Panc1 (cell line): ENCODE measurements at regions of chr14 and their contacts with region 1.

Region 1: DNA sequence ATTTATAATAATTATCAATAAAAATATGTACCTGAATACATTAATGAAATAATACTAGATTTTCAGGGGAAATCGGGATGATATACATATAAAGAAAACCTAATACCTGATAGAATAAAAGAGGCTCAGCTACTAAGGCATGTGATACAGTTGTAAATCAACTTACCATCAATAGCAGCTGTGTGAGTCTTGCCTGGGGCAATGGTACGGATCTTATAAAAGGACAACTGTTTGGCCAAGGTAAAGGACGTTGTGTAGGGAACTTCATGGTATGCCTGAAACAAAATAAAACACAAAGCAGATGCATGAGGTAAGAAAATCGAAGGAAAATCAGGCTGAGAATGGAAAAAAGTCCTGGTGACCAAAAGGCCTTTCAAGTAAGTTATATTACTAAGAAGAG is 25.4 kb downstream of the NEK9 start:
- DNase-seq: no peak
- ATAC-seq: no peak
- H3K4me3 ChIP-seq: no peak overlapping the region
- H3K27ac ChIP-seq: no peak overlapping the region
- H3K4me1 ChIP-seq: no peaks in the 10 kb centered on the region
- H3K27me3 ChIP-seq: no peaks in the 10 kb centered on the region
- CTCF ChIP-seq: no peak

Region 2: GRCh38 chr14:74913986-74914573 is 187.4 kb before region 1 on chr14:
- CTCF ChIA-PET with region 1: no interaction called
- POLR2A ChIA-PET with region 1: no interaction called
- in situ Hi-C with region 1: no loop called
- intact Hi-C with region 1: no loop called
- DNase-seq: peak; percentile 35
- ATAC-seq: peak; percentile 81
- H3K4me3 ChIP-seq: no peak overlapping the region
- H3K27ac ChIP-seq: no peak overlapping the region
- H3K4me1 ChIP-seq: no peaks in the 10 kb centered on the region
- H3K27me3 ChIP-seq: no peaks in the 10 kb centered on the region
- CTCF ChIP-seq: peak; percentile 82

Region 3: GRCh38 chr14:74955229-74956026 is 146.1 kb before region 1 on chr14 and contains the start of gene PGF:
- CTCF ChIA-PET with region 1: interaction called, 10 read pairs
- POLR2A ChIA-PET with region 1: no interaction called
- in situ Hi-C with region 1: no loop called
- intact Hi-C with region 1: no loop called
- DNase-seq: no peak
- ATAC-seq: peak; percentile 88
- H3K4me3 ChIP-seq: peak within 1 kb of the TSS; percentile 47 to 53
- H3K27ac ChIP-seq: no peak within 1 kb of the TSS; the same call in 1 of the 2 replicates
- H3K4me1 ChIP-seq: peaks cover 8% of the 10 kb centered on the region; the same call in 1 of the 2 replicates
- H3K27me3 ChIP-seq: no peaks in the 10 kb centered on the region
- CTCF ChIP-seq: no peak
- total RNA-seq, gene PGF: 7.3 TPM

Region 4: DNA sequence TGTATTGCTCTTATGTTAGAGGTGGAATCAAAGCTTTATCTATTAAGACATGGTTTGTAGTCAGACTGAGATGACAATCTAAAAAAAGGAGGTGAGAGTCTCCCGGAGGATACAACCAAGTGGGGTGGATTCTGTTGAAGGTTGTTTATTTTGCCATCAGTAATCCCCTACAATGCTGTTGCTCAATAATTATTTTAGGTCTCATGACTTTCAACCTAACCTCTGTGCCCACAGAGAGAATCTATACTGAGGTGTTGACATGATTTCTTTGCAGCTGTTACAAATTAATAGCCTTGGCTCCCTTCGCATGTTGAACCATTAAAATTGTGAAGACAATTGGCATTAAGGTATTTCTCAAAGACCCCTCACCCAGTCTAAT is 148.5 kb after region 1 on chr14:
- CTCF ChIA-PET with region 1: no interaction called
- POLR2A ChIA-PET with region 1: interaction called, 19 read pairs
- in situ Hi-C with region 1: no loop called
- intact Hi-C with region 1: no loop called
- DNase-seq: no peak
- ATAC-seq: no peak
- H3K4me3 ChIP-seq: no peak overlapping the region
- H3K27ac ChIP-seq: no peak overlapping the region
- H3K4me1 ChIP-seq: no peaks in the 10 kb centered on the region
- H3K27me3 ChIP-seq: no peaks in the 10 kb centered on the region
- CTCF ChIP-seq: no peak

Region 5: GRCh38 chr14:75260040-75260763 is 158.7 kb after region 1 on chr14:
- CTCF ChIA-PET with region 1: no interaction called
- POLR2A ChIA-PET with region 1: no interaction called
- in situ Hi-C with region 1: no loop called
- intact Hi-C with region 1: no loop called
- DNase-seq: no peak
- ATAC-seq: no peak
- H3K4me3 ChIP-seq: no peak overlapping the region; a peak in 1 of 4 replicates
- H3K27ac ChIP-seq: no peak overlapping the region
- H3K4me1 ChIP-seq: peaks cover 14% of the 10 kb centered on the region
- H3K27me3 ChIP-seq: no peaks in the 10 kb centered on the region
- CTCF ChIP-seq: no peak